A673 (cell line): ENCODE measurements at regions of chr13 and their contacts with region 1.

Region 1: GRCh38 chr13:76440568-76440967 is 445.6 kb downstream of the KCTD12 start:
- DNase-seq: no peak
- H3K4me3 ChIP-seq: no peak overlapping the region
- H3K27ac ChIP-seq: no peak overlapping the region
- H3K4me1 ChIP-seq: no peaks in the 10 kb centered on the region
- H3K27me3 ChIP-seq: no peaks in the 10 kb centered on the region
- CTCF ChIP-seq: no peak

Region 2: GRCh38 chr13:75372517-75372916 is 1068.1 kb before region 1 on chr13:
- CTCF ChIA-PET with region 1: no interaction called
- POLR2A ChIA-PET with region 1: no interaction called
- intact Hi-C with region 1: no loop called
- DNase-seq: peak; percentile 60
- H3K4me3 ChIP-seq: no peak overlapping the region
- H3K27ac ChIP-seq: no peak overlapping the region
- H3K4me1 ChIP-seq: no peaks in the 10 kb centered on the region
- H3K27me3 ChIP-seq: no peaks in the 10 kb centered on the region
- CTCF ChIP-seq: peak; percentile 68

Region 3: DNA sequence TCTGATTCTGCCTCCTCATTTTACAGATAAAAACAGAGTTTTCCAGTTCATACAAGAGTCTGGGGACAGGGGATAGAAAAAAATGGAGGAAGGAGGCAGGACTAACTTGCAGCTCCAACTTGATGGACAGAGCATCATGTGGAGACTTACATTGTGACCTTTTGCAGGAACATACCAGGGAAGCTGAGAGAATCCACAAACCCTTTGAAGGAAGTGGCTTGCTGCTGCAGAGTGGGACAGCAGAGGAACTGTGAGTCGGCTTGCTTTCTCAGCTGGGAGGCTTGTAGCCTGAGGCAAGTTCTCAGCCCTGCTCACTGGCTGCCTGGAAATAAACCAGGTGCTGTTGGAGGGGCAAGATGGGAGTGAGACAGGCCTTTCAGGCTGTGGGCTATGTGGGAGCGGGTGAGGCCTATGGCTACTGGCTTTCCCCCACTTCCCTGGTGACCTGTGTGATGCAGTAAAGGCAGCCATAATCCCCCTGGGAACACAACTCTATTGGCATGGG is 168.8 kb before region 1 on chr13:
- CTCF ChIA-PET with region 1: no interaction called
- POLR2A ChIA-PET with region 1: interaction called, 10 read pairs
- intact Hi-C with region 1: no loop called
- DNase-seq: no peak
- H3K4me3 ChIP-seq: no peak overlapping the region
- H3K27ac ChIP-seq: no peak overlapping the region
- H3K4me1 ChIP-seq: no peaks in the 10 kb centered on the region
- H3K27me3 ChIP-seq: no peaks in the 10 kb centered on the region
- CTCF ChIP-seq: no peak

Region 4: DNA sequence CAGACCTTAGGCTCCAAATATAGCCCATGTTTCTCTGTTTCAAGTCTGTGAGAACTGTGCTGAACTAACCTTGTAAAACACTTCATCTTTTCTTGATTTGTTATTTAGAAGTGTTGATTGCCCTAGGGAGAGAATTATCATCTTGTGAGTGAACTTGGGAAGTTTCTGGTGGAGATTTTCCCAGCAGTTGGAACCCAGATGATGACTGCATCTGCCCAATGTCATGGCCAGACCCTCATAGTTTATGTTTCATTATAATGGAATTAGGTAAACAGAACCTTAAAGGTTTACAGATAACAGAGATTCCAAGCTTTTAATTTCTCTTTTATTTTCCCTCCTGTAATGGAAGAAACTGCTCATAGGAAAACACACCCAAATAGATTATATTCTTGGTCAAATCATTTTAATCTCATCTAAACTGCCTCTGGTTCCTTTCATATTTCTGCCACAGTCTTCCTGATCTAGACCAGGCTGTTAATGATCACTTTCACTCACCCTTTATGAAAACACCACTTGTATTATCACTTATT is 123.5 kb before region 1 on chr13:
- CTCF ChIA-PET with region 1: no interaction called
- POLR2A ChIA-PET with region 1: no interaction called
- intact Hi-C with region 1: no loop called
- DNase-seq: no peak
- H3K4me3 ChIP-seq: no peak overlapping the region
- H3K27ac ChIP-seq: no peak overlapping the region
- H3K4me1 ChIP-seq: no peaks in the 10 kb centered on the region
- H3K27me3 ChIP-seq: no peaks in the 10 kb centered on the region
- CTCF ChIP-seq: no peak

Region 5: GRCh38 chr13:76512721-76513145 is 72.2 kb after region 1 on chr13:
- CTCF ChIA-PET with region 1: no interaction called
- POLR2A ChIA-PET with region 1: no interaction called
- intact Hi-C with region 1: no loop called
- DNase-seq: peak; percentile 11
- H3K4me3 ChIP-seq: no peak overlapping the region
- H3K27ac ChIP-seq: no peak overlapping the region
- H3K4me1 ChIP-seq: no peaks in the 10 kb centered on the region
- H3K27me3 ChIP-seq: peaks cover 3% of the 10 kb centered on the region
- CTCF ChIP-seq: no peak